Dorsolateral prefrontal cortex (tissue), 120 donors: ENCODE measurements at regions of chr10 and their contacts with region 1.

Region 1: DNA sequence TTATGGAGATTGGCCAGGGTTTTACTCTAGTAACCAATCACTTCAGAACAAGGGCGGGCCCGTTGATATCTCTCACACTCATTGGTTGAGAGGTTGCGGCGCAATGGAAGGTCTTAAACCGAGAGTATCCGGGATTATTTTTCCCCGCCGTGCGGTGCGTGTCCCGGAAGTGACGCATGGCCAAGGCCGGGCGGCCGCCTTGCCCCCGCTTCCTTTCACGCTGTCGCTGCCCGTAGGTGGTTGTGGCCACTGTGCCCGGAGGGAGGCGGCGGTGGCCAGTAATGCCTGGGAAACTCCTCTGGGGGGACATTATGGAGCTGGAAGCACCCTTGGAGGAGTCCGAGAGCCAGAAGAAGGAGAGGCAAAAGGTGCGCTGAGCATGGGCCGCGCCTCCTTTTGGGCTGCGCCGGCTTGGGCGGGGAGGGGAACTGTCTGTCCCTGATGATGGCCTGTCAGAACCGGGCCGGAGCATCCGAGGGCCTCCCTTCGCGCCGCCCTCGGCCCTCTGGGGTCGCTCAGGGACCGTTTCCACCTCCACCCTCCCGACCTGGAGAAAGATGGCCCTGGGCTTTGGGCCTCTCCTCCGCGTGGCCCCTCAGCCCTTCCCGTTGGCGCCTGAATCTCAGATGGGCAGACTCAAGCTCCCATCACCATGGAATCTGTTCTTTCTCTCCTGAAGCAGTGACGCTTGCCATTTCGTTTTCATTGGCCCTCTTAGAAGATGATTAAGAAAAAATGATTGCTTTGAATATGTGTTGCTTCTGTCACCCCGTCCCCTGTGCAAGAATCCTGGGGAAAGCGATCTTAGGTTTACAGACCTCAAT is at the start of gene DDX50:
- DNase-seq: peak; percentile 98 to 100 (median 99)
- H3K4me3 ChIP-seq: peak within 1 kb of the TSS; percentile 64 to 100 (median 93)
- H3K27ac ChIP-seq: peak within 1 kb of the TSS; percentile 83 to 100 (median 99)
- H3K27me3 ChIP-seq: no peaks in the 10 kb centered on the region
- CTCF ChIP-seq: peak in 28 of 56 donors; percentile 8 to 53 (median 35)
- total RNA-seq, gene DDX50: 20.8 to 39.0 (median 29.0) TPM

Region 2: GRCh38 chr10:68231106-68231816 is 670.1 kb before region 1 on chr10:
- intact Hi-C with region 1: loop called in 1 of 2 experiments (anchors 5 kb)
- DNase-seq: peak; percentile 58 to 86 (median 70)
- H3K4me3 ChIP-seq: peak overlapping the region; percentile 54 to 91 (median 77)
- H3K27ac ChIP-seq: peak overlapping the region; percentile 50 to 94 (median 87)
- H3K27me3 ChIP-seq: no peaks in the 10 kb centered on the region
- CTCF ChIP-seq: peak in 40 of 56 donors; percentile 12 to 61 (median 36)

Region 3: DNA sequence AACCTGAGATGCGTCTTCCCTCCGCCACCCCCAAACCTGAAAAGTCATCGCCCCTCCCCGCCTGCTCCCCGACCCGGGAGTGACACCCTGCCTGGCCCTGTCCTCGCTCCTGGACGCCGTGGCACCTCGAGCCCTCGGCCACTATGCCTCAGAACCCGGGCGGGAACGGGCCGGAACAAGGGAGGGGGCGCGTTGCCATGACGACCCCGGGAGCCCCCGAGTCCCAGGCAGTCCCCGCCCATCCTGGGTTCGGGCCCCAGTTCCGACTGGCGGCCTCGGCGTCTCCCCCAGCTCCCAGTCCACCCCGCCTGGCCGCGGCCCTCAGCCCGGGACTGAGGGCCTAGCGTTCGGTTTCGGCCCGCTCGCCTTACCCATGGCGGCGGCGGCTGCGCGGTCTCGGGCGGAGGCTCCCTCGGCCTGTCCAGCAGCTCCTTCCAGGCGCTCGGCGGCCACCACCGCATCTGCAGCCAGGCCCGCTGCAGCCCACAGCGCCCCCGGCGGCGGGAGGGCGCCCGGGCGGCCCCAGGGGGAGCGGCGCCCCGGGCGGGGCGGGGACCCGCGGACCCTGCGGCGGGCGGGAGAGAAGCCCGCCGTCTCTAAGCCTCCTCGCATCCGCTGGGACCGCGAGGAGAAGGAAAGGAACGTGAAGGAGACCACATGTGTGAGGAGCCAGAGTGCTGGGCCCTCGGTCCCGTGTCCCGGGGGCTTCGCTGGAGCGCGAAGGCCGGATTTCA is 494.3 kb before region 1 on chr10 and contains the start of gene RUFY2:
- intact Hi-C with region 1: loop called (anchors 5 to 10 kb)
- DNase-seq: peak; percentile 60 to 88 (median 76)
- H3K4me3 ChIP-seq: peak within 1 kb of the TSS; percentile 67 to 99 (median 95)
- H3K27ac ChIP-seq: peak within 1 kb of the TSS; percentile 77 to 99 (median 97)
- H3K27me3 ChIP-seq: no peaks in the 10 kb centered on the region
- CTCF ChIP-seq: peak in 53 of 56 donors; percentile 5 to 97 (median 62)
- total RNA-seq, gene RUFY2: 64.5 to 128 (median 91.0) TPM

Region 4: DNA sequence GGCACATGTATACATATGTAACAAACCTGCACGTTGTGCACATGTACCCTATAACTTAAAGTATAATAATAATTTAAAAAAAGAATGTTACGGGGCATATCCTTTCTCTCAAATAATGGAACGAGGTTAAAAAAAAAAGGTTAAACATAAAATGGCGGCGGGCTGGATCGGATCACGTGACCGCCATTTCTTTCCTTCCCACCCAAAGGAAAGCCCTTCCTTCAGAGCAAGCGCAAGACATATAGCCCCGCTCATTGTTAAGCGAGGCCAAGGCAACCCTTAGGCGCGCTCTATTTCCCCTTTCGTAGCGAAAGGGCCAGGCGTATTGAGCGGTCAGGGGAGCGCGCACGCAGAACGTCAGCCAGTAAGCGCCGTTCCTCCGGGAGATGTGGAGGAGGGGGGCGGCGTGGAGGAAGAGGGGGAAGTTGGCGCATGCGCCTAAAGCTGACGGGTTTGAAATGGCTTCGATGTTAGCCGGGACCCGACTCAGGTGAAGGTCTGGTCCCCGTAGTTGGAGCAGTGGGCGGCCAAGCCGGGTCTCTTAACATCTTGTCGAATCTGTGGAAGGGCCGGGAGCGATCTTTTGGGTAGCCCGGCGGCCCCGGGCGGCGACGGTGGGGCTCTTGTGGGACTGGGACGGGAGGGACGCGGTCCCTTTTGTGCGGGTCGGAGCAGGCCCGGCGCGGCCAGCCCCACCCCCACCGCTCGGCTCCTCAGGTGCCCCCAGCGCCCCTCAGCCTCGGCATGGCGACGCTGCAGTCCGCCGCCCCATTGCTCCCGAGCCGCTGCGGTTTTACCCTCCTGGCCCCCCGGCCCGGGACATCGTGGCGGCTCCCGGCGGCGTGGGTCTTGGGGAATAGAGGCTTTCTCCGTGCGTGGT is 180.3 kb before region 1 on chr10 and contains the start of gene CCAR1:
- intact Hi-C with region 1: loop called in 1 of 2 experiments (anchors 5 kb)
- DNase-seq: peak; percentile 93 to 97 (median 95)
- H3K4me3 ChIP-seq: peak within 1 kb of the TSS; percentile 67 to 100 (median 96)
- H3K27ac ChIP-seq: peak within 1 kb of the TSS; percentile 79 to 99 (median 97)
- H3K27me3 ChIP-seq: no peaks in the 10 kb centered on the region
- CTCF ChIP-seq: peak in 21 of 56 donors; percentile 9 to 49 (median 26)
- total RNA-seq, gene CCAR1: 43.8 to 95.7 (median 69.5) TPM

Region 5: GRCh38 chr10:69179743-69180524 is 278.6 kb after region 1 on chr10 and contains the start of gene SUPV3L1:
- intact Hi-C with region 1: loop called in 1 of 2 experiments (anchors 5 kb)
- DNase-seq: peak; percentile 89 to 100 (median 97)
- H3K4me3 ChIP-seq: peak within 1 kb of the TSS; percentile 73 to 100 (median 99)
- H3K27ac ChIP-seq: peak within 1 kb of the TSS; percentile 94 to 100 (median 99)
- H3K27me3 ChIP-seq: no peaks in the 10 kb centered on the region
- CTCF ChIP-seq: peak in 14 of 56 donors; percentile 6 to 41 (median 19)
- total RNA-seq, gene SUPV3L1: 23.2 to 52.6 (median 39.0) TPM